Breast epithelium (tissue), 4 donors: ENCODE measurements at regions of chr2 and their contacts with region 1.

Region 1: GRCh38 chr2:105090091-105090490 is 52.2 kb downstream of the MRPS9 start:
- DNase-seq: no peak
- H3K4me3 ChIP-seq: no peak overlapping the region
- H3K27ac ChIP-seq: no peak overlapping the region
- H3K4me1 ChIP-seq: no peaks in the 10 kb centered on the region
- H3K27me3 ChIP-seq: no peaks in the 10 kb centered on the region
- CTCF ChIP-seq: no peak
- POLR2A ChIP-seq: no peak

Region 2: DNA sequence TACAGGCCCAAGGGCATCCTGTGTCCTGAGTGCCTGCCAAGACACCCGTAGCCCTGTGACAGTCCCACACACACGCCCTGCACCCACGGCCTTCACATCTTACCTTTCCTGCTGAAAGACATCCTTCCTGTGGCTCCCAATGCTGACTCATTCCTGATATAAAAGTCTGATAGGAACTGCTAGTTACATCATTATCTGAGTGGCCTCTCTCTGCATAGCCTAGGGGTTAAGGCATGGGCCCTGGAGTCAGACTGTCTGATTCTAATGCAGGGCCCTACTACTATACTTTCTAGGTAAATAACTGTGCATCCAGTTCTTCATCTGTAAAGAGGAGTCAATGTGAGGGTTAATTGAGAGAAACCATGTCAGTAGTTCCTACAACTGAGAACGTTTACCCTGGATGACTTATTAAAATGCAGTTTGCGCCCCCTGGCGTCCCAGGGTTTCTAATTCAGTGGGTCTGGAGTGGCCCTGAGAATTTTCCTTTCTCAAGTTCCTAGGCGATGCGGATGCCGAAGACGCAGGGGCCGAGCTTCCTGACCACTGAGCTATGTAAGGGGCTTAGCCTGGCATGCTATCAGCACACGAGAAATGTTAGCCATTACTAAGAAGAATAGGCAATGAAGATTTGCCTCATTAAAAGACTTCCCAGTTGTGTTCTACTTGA is 145.4 kb after region 1 on chr2:
- intact Hi-C with region 1: loop called (anchors 10 kb)
- DNase-seq: peak; percentile 40 to 60
- H3K4me3 ChIP-seq: no peak overlapping the region
- H3K27ac ChIP-seq: no peak overlapping the region
- H3K4me1 ChIP-seq: no peaks in the 10 kb centered on the region
- H3K27me3 ChIP-seq: no peaks in the 10 kb centered on the region
- CTCF ChIP-seq: peak in 2 of 3 donors; percentile 37 to 49
- POLR2A ChIP-seq: no peak

Region 3: DNA sequence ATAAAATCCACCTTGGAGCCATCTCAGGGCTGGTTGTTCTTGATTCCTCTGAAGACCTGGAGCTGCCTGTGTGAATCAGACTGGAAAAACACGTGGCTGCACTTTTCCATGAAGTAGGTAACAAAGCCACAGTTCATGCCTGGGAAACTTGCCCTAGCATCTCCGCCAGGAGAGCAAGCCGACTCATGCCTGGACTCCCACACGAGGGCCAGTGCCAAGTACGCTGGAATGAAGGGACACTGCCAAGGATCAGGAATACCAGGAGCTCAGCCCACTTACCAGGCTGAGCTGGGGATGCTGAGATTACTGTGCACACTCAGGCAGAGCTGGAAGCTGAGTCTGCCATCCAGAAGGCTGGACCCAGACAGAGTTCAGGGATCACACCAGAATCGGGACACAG is 319.6 kb after region 1 on chr2:
- intact Hi-C with region 1: loop called (anchors 10 kb)
- DNase-seq: peak; percentile 63 to 94
- H3K4me3 ChIP-seq: peak overlapping the region in 1 of 3 donors; percentile 17
- H3K27ac ChIP-seq: peak overlapping the region; percentile 75 to 83
- H3K4me1 ChIP-seq: peaks cover 3 to 8% of the 10 kb centered on the region in 2 donors
- H3K27me3 ChIP-seq: no peaks in the 10 kb centered on the region
- CTCF ChIP-seq: no peak
- POLR2A ChIP-seq: no peak